Dorsolateral prefrontal cortex (tissue), 120 donors: ENCODE measurements at regions of chr2 and their contacts with region 1.

Region 1: DNA sequence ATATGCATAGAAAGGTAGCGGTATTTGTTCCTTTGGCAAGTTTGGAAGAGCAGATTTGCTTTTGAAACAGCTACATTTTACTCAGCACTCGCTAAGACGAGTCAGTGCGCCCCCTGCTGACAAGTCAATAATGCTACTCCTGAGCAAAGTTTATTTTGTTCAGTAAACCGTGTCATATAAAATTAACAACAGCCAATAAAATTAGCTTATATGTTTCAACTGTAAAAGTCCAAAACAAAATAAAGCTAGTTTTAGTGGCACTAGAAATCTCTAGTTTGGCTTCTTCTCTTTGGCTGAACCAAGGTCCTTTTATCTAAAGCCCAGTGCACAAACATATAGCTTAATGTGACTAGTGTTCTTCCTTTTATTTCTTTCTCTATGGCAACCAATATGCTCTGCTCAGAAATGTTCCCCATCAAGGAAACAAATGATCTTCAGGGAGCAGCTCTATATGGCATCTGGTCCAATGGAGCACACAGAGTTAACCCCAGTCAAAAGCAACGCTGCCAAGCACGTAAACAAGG is 4.2 kb upstream of the POU3F3 start:
- DNase-seq: peak; percentile 63 to 89 (median 80)
- H3K4me3 ChIP-seq: peak overlapping the region; percentile 26 to 93 (median 80)
- H3K27ac ChIP-seq: peak overlapping the region; percentile 75 to 100 (median 99)
- H3K27me3 ChIP-seq: peaks cover 0 to 12% (median 0%) of the 10 kb centered on the region in 45 donors
- CTCF ChIP-seq: peak; percentile 73 to 95 (median 88)

Region 2: DNA sequence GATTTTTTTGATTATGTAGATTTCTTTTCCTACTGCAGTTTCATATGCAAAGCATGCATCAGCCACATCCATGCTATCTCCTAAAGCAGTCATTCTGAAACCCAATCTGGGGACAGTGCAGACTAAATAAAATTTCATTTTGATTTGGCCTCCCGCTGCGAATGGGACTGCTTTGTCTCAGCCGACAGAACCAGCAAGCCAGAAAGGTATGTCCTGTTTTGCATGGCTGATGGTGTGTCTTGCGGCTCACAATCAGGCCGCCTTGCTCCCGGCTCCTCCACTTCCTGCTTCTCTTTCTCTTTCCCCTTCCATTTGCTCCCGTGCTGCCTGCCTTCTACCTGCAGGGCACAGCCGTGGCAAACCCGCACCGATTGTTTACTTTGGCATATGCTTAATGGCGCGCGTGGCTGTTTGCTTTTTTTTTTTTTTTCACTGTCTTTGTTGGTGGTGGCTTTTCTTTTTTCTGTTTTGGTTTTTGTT is 415.3 kb before region 1 on chr2:
- intact Hi-C with region 1: loop called (anchors 2 to 5 kb)
- DNase-seq: peak in 5 of 10 donors; percentile 42 to 59 (median 48)
- H3K4me3 ChIP-seq: peak overlapping the region; percentile 32 to 71 (median 56)
- H3K27ac ChIP-seq: peak overlapping the region; percentile 29 to 97 (median 91)
- H3K27me3 ChIP-seq: no peaks in the 10 kb centered on the region
- CTCF ChIP-seq: peak in 6 of 56 donors; percentile 11 to 22 (median 14)

Region 3: GRCh38 chr2:104658144-104658835 is 191.4 kb before region 1 on chr2:
- intact Hi-C with region 1: loop called in 1 of 2 experiments (anchors 2 kb)
- DNase-seq: peak in 8 of 10 donors; percentile 23 to 56 (median 50)
- H3K4me3 ChIP-seq: peak overlapping the region in 34 of 59 donors; percentile 13 to 73 (median 61)
- H3K27ac ChIP-seq: peak overlapping the region in 35 of 59 donors; percentile 0 to 80 (median 53)
- H3K27me3 ChIP-seq: peaks cover 0 to 11% (median 0%) of the 10 kb centered on the region in 45 donors
- CTCF ChIP-seq: no peak

Region 4: DNA sequence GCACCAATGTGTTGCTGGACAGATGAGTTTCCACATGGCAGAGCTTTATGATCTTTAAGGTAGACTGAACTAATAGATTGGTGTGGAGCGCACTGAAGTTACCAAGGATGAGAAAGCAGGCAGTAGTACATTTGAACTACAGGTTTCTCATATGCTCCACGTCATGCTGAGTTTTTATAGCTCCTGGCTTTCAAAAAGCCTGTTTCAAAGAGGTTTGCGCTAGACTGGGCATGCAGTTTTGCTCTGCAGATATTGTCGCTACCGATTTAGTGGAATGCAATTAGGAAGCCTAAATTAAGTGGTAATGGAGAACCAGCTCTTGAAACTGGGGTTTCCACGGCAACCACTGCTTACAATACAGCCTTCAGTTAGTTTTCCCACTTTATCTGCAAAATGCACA is 147.2 kb before region 1 on chr2:
- intact Hi-C with region 1: loop called in 1 of 2 experiments (anchors 5 kb)
- DNase-seq: peak in 1 of 10 donors; percentile 12
- H3K4me3 ChIP-seq: peak overlapping the region in 54 of 59 donors; percentile 10 to 67 (median 46)
- H3K27ac ChIP-seq: peak overlapping the region in 44 of 59 donors; percentile 7 to 76 (median 60)
- H3K27me3 ChIP-seq: peaks cover 0 to 8% (median 0%) of the 10 kb centered on the region in 45 donors
- CTCF ChIP-seq: no peak

Region 5: DNA sequence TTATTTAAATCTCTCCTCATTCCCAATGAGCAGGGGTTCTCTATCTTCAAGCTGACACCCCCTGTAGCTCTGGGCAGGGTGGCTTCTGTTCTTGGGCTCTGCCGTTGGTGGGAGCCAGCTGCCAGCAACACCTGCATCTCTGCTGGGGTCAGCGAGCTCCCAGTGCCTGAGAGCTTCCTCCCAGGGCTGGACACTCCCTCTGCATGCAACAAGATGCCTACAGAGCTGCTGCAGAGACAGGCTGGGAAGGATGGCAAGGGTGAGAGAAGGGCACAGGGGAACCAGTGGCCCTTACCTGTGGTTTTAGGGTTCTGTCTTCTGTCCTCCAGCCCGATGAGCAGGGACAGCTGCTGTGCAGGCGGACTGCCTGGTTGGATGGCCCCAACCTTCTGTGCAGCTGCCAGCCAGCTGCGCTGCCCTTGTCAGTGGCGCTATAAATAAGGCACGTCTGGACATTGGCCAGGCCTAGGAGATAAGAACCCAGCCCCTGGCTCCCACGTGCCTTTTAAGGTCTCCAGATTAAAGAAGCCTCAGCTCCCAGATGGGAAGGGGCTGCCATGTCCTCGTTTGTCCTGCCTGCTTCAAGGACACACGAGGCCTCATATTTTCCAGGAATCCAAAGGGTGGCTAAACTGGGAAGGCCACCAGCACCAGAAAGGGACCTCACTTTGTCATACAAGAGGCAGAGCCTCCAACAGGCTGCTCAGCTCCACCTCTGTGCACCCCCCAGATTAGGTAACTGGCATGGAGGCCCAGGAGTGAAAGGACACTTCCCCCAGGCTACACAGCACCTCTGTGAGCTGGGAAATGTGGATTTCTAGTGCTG is 588.6 kb after region 1 on chr2:
- intact Hi-C with region 1: no loop called
- DNase-seq: no peak
- H3K4me3 ChIP-seq: no peak overlapping the region
- H3K27ac ChIP-seq: peak overlapping the region in 29 of 59 donors; percentile 0 to 74 (median 38)
- H3K27me3 ChIP-seq: peaks cover 0 to 4% (median 0%) of the 10 kb centered on the region in 45 donors
- CTCF ChIP-seq: no peak